Natural killer cell (primary cell): ENCODE measurements at regions of chr5 and their contacts with region 1.

Region 1: GRCh38 chr5:126600631-126601511 is at the start of gene PHAX:
- DNase-seq: peak; percentile 75 to 86
- ATAC-seq: peak; percentile 92 to 97 (median 93)
- H3K4me3 ChIP-seq: peak within 1 kb of the TSS; percentile 89
- H3K4me3 Mint-ChIP-seq: peak within 1 kb of the TSS; percentile 82
- H3K27ac ChIP-seq: peak within 1 kb of the TSS; percentile 85
- H3K27ac Mint-ChIP-seq: peak within 1 kb of the TSS; percentile 64 to 76
- H3K4me1 ChIP-seq: peaks cover 17% of the 10 kb centered on the region
- H3K4me1 Mint-ChIP-seq: peaks cover 12 to 19% of the 10 kb centered on the region in 2 donors
- H3K27me3 ChIP-seq: no peaks in the 10 kb centered on the region
- H3K27me3 Mint-ChIP-seq: peaks cover 0 to 8% of the 10 kb centered on the region in 2 donors
- CTCF ChIP-seq: peak; percentile 71
- total RNA-seq, gene PHAX: 39.2 to 43.6 (median 40.0) TPM

Region 2: GRCh38 chr5:126339215-126339805 is 261.6 kb before region 1 on chr5:
- intact Hi-C with region 1: loop called (anchors 5 kb)
- DNase-seq: peak in 1 of 2 donors; percentile 80
- ATAC-seq: peak; percentile 58 to 64 (median 59)
- H3K4me3 ChIP-seq: no peak overlapping the region
- H3K4me3 Mint-ChIP-seq: no peak overlapping the region
- H3K27ac ChIP-seq: no peak overlapping the region
- H3K27ac Mint-ChIP-seq: no peak overlapping the region
- H3K4me1 ChIP-seq: no peaks in the 10 kb centered on the region
- H3K4me1 Mint-ChIP-seq: no peaks in the 10 kb centered on the region
- H3K27me3 ChIP-seq: no peaks in the 10 kb centered on the region
- H3K27me3 Mint-ChIP-seq: peaks cover 7 to 37% of the 10 kb centered on the region in 2 donors
- CTCF ChIP-seq: peak; percentile 87

Region 3: GRCh38 chr5:126354012-126354857 is 246.6 kb before region 1 on chr5:
- intact Hi-C with region 1: loop called (anchors 1 kb)
- DNase-seq: peak in 1 of 2 donors; percentile 72
- ATAC-seq: peak in 2 of 3 donors; percentile 54 to 62
- H3K4me3 ChIP-seq: no peak overlapping the region
- H3K4me3 Mint-ChIP-seq: peak overlapping the region; percentile 22
- H3K27ac ChIP-seq: no peak overlapping the region
- H3K27ac Mint-ChIP-seq: no peak overlapping the region
- H3K4me1 ChIP-seq: peaks cover 7% of the 10 kb centered on the region
- H3K4me1 Mint-ChIP-seq: peaks cover 15 to 20% of the 10 kb centered on the region in 2 donors
- H3K27me3 ChIP-seq: no peaks in the 10 kb centered on the region
- H3K27me3 Mint-ChIP-seq: peaks cover 5 to 6% of the 10 kb centered on the region in 2 donors
- CTCF ChIP-seq: peak; percentile 64

Region 4: DNA sequence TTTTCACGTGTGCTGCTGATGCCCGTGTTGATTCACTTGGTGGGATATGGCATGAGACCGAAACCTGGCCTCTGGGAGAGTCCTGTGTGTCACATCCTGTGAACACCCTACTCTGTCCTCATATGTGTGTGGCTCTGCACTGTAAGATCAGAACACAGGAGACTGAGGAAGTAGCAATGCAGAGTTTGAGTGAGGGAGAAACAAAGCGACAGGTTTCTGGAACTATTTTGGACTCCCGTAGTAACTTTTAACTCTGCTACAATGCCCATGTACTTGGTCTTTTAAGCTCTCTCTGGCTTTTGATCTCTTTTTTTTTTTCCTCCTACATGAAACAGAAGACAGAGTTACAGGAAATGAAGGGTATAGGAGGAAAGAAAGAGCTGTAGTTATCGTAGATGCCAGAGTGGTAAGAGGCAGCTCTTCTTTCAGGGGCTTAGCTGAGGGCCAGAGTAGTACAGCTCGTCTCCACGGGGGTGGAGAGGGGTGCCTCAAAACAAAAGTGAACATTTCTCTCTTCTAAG is 151.1 kb before region 1 on chr5:
- intact Hi-C with region 1: loop called (anchors 2 kb)
- DNase-seq: peak; percentile 50 to 81
- ATAC-seq: peak; percentile 78 to 91 (median 82)
- H3K4me3 ChIP-seq: peak overlapping the region; percentile 24
- H3K4me3 Mint-ChIP-seq: peak overlapping the region; percentile 97
- H3K27ac ChIP-seq: peak overlapping the region; percentile 93
- H3K27ac Mint-ChIP-seq: peak overlapping the region; percentile 100
- H3K4me1 ChIP-seq: peaks cover 18% of the 10 kb centered on the region
- H3K4me1 Mint-ChIP-seq: peaks cover 41 to 47% of the 10 kb centered on the region in 2 donors
- H3K27me3 ChIP-seq: no peaks in the 10 kb centered on the region
- H3K27me3 Mint-ChIP-seq: no peaks in the 10 kb centered on the region
- CTCF ChIP-seq: no peak

Region 5: GRCh38 chr5:126777974-126778674 is 177.3 kb after region 1 on chr5:
- intact Hi-C with region 1: loop called (anchors 1 kb)
- DNase-seq: peak; percentile 79 to 96
- ATAC-seq: peak; percentile 72 to 85 (median 73)
- H3K4me3 ChIP-seq: peak overlapping the region; percentile 85
- H3K4me3 Mint-ChIP-seq: peak overlapping the region; percentile 97
- H3K27ac ChIP-seq: peak overlapping the region; percentile 86
- H3K27ac Mint-ChIP-seq: peak overlapping the region; percentile 93 to 99
- H3K4me1 ChIP-seq: peaks cover 19% of the 10 kb centered on the region
- H3K4me1 Mint-ChIP-seq: peaks cover 25 to 28% of the 10 kb centered on the region in 2 donors
- H3K27me3 ChIP-seq: no peaks in the 10 kb centered on the region
- H3K27me3 Mint-ChIP-seq: no peaks in the 10 kb centered on the region
- CTCF ChIP-seq: no peak

Region 6: DNA sequence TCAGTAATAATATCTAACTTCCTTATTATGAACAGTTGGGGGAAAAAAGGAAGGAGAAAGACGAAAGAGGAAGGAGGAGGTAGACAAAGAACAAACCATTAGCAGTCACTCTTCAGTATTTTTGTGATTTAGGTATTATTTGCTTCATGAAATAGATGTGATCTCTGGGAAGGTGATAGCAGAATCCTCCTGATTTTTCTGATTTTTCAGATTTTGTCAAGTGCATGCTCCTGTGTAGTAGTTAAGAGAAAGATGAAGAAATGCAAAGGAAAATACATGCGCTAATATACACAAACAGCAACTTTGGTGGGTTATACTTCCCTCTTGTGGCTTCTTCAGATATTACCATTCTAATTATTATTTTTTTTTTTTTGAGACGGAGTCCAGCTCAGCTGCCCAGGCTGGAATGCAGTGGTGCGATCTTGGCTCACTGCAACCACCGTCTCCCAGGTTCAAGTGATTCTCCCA is 207.7 kb after region 1 on chr5:
- intact Hi-C with region 1: loop called (anchors 2 kb)
- DNase-seq: peak in 1 of 2 donors; percentile 53
- ATAC-seq: no peak
- H3K4me3 ChIP-seq: no peak overlapping the region
- H3K4me3 Mint-ChIP-seq: no peak overlapping the region
- H3K27ac ChIP-seq: peak overlapping the region; percentile 4
- H3K27ac Mint-ChIP-seq: peak overlapping the region; percentile 94 to 95
- H3K4me1 ChIP-seq: peaks cover 20% of the 10 kb centered on the region
- H3K4me1 Mint-ChIP-seq: peaks cover 27 to 31% of the 10 kb centered on the region in 2 donors
- H3K27me3 ChIP-seq: no peaks in the 10 kb centered on the region
- H3K27me3 Mint-ChIP-seq: no peaks in the 10 kb centered on the region
- CTCF ChIP-seq: peak; percentile 63